ENCODE measurements at regions of chr1 and their contacts with region 1.

Region 1: DNA sequence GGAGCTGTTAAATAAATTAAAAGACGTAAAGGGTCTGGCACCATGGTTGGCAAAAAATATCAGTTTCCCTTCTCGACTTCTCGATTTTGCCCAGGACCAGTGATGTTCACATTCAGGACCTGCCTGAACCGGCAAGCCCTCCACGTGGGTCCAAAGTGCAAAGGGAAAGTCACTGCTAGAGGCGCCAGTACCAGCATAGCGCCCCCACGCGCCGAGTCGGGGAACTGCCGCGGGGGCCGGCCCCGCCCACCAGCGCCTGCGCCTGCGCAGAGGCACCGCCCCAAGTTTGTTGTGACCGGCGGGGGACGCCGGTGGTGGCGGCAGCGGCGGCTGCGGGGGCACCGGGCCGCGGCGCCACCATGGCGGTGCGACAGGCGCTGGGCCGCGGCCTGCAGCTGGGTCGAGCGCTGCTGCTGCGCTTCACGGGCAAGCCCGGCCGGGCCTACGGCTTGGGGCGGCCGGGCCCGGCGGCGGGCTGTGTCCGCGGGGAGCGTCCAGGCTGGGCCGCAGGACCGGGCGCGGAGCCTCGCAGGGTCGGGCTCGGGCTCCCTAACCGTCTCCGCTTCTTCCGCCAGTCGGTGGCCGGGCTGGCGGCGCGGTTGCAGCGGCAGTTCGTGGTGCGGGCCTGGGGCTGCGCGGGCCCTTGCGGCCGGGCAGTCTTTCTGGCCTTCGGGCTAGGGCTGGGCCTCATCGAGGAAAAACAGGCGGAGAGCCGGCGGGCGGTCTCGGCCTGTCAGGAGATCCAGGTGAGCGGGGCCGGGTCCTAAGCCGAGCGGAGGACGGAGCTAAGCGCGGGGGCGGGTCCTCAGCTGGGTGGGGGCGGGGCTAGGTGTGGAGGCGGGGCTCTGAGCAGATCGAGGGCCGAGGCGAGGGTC is at the start of gene PINK1:
- DNase-seq: no peak
- H3K4me3 ChIP-seq: peak within 1 kb of the TSS; percentile 87
- H3K27me3 ChIP-seq: no peaks in the 10 kb centered on the region
- CTCF ChIP-seq: peak; percentile 83
- polyA plus RNA-seq, gene PINK1: 65.8 and 89.2 TPM in 2 replicates

Region 2: DNA sequence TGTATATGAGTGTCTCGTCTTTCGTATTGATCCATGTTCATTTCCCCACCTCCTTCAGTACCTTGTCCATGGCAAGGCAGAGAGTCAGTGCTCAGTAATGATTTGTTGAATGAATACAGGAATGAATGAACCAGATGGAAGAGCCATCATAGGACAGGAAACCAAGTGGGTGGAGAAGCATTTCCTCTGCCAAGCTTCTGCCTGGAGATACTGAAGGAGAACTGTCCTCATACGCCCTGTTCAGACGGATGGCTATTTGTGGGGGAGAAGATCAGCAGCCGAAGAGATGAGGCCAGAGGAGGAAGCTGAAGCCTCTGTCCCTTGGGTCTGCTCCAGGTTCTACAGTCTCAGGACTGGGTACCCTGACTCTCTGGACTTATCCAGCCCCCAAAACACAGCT is 75.2 kb before region 1 on chr1:
- CTCF ChIA-PET with region 1: interaction called, 12 read pairs
- POLR2A ChIA-PET with region 1: no interaction called
- DNase-seq: no peak
- H3K4me3 ChIP-seq: no peak overlapping the region
- H3K27me3 ChIP-seq: peaks cover 43% of the 10 kb centered on the region
- CTCF ChIP-seq: no peak

Region 3: DNA sequence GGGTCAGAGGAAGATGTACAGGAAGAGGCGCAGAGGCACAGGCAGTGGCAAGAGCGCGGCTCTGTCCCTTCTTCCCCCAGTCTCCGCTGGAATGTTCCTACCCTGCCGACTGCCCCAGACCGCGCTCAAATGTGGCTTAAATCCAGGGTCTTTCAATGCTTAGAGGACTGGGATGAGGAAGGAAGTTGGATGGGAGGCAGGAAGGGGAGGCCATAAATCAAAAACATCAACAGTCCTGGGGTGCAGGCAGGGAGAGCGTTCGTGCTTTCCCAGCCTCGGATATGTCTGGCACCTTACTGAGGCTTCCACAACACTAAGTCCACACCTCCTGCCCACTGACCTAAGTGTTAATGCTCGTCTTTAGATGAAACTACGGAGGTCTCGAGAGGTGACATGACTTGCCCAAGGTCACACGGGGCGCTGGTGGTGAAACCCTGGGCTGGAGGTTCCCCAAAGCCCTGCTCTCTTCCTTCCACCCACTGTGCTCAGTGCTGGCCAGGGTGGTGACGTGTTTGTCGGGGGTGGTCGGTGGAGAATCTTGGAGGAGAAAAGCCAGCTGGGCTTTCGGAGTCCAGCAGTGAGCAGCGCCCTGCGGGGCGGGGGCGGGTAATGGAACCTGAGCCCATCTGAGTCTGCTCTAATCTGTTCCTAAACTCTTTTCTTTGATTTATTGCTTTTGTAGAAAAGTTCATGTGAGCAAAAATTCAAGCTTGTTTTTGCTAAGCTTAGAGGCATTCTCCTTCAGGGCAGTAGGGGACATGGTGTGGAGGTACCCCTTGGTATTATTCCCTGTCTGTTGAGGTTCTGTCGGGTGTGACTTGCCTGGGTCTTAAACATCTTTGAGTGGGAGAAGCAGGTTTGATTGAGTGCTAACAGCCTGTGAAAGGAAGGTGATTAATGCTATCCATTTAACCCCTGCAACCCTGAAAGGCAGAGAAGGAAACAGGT is 43.8 kb before region 1 on chr1:
- CTCF ChIA-PET with region 1: interaction called, 82 read pairs
- POLR2A ChIA-PET with region 1: no interaction called
- DNase-seq: no peak
- H3K4me3 ChIP-seq: peak overlapping the region; percentile 14; the same call in 1 of the 2 replicates
- H3K27me3 ChIP-seq: no peaks in the 10 kb centered on the region
- CTCF ChIP-seq: no peak

Region 4: DNA sequence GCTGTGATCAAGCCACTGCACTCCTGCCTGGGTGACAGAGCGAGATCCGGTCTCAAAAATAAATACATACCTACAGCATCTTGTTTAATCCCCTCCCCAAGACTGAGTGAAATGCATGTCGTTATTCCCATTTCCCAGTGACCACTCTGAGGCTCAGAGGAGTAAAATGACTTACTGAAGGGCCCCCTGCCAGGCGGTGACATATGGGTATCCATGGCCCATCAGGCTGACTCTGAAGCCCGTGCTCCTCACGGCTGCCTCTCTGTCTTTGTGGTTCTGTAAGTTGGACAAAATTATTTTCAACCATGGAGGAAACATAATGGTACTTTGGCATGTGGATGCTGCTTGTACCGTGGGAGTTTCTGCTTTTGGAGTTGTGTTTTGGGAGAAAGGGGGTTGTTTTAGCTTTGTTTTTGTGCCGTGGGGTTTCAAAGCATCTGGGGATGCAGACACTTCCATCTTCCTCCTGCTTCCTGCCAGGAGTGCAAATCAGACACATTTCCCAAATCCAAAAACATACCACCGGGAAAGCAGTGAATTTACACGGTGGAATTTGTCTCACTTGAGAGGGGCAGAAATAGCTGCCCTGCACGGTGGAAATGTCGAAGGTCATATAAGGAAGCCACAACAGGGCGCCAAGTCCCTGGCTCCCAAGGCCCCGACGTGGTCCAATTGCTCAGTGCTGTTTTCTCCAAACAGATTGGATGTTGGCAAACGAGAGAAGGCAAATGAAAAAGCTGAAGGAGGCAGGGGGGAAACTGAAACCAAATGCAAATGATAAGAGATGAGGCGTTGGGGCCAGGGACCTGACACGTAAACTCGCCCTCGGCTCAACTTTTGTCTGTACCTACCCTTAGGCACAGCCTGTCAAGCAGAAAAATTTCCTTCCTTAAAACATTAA is 17.2 kb before region 1 on chr1:
- CTCF ChIA-PET with region 1: interaction called, 21 read pairs
- POLR2A ChIA-PET with region 1: no interaction called
- DNase-seq: no peak
- H3K4me3 ChIP-seq: no peak overlapping the region
- H3K27me3 ChIP-seq: no peaks in the 10 kb centered on the region
- CTCF ChIP-seq: no peak

Region 5: GRCh38 chr1:20661207-20662109 is 28.0 kb after region 1 on chr1 and contains the start of gene DDOST:
- CTCF ChIA-PET with region 1: no interaction called
- POLR2A ChIA-PET with region 1: interaction called, 15 read pairs
- DNase-seq: peak; percentile 92
- H3K4me3 ChIP-seq: peak within 1 kb of the TSS; percentile 91
- H3K27me3 ChIP-seq: no peaks in the 10 kb centered on the region
- CTCF ChIP-seq: peak; percentile 71
- polyA plus RNA-seq, gene DDOST: 581 and 587 TPM in 2 replicates

Measured in BJ (cell line).